A673 (cell line): ENCODE measurements at regions of chr2 and their contacts with region 1.

Region 1: GRCh38 chr2:238784671-238785527 is 63.0 kb upstream of the TWIST2 start:
- DNase-seq: peak; percentile 72
- H3K4me3 ChIP-seq: no peak overlapping the region
- H3K27ac ChIP-seq: no peak overlapping the region
- H3K4me1 ChIP-seq: no peaks in the 10 kb centered on the region
- H3K27me3 ChIP-seq: peaks cover 27% of the 10 kb centered on the region
- CTCF ChIP-seq: peak; percentile 92

Region 2: DNA sequence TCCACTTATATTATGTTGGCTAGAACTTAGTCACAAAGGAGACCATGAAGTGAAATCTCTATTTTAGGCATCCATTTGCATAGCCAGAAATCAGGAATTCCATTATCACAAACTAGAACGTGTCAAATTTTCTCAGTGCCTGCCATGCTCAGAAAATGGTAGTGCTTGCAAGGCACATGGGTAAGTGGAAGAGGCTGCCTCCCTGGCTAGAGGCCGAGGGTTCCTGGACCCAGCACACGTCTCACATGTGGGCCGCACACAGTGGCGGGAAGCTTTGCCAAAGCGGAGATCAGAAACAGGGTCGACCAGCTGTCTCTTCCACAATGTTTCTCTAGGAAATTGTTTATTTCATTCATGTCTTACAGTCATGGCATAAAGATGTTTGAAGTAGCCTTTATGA is 422.3 kb before region 1 on chr2:
- CTCF ChIA-PET with region 1: interaction called, 11 read pairs
- POLR2A ChIA-PET with region 1: no interaction called
- intact Hi-C with region 1: no loop called
- DNase-seq: no peak
- H3K4me3 ChIP-seq: no peak overlapping the region
- H3K27ac ChIP-seq: no peak overlapping the region
- H3K4me1 ChIP-seq: no peaks in the 10 kb centered on the region
- H3K27me3 ChIP-seq: no peaks in the 10 kb centered on the region
- CTCF ChIP-seq: no peak

Region 3: GRCh38 chr2:238370823-238371372 is 414.0 kb before region 1 on chr2:
- CTCF ChIA-PET with region 1: interaction called, 9 read pairs
- POLR2A ChIA-PET with region 1: no interaction called
- intact Hi-C with region 1: loop called (anchors 2 kb)
- DNase-seq: peak; percentile 66
- H3K4me3 ChIP-seq: no peak overlapping the region
- H3K27ac ChIP-seq: no peak overlapping the region
- H3K4me1 ChIP-seq: no peaks in the 10 kb centered on the region
- H3K27me3 ChIP-seq: no peaks in the 10 kb centered on the region
- CTCF ChIP-seq: peak; percentile 69

Region 4: GRCh38 chr2:238513346-238513745 is 271.6 kb before region 1 on chr2:
- CTCF ChIA-PET with region 1: interaction called, 13 read pairs
- POLR2A ChIA-PET with region 1: no interaction called
- intact Hi-C with region 1: loop called (anchors 2 kb)
- DNase-seq: peak; percentile 70
- H3K4me3 ChIP-seq: no peak overlapping the region
- H3K27ac ChIP-seq: no peak overlapping the region
- H3K4me1 ChIP-seq: no peaks in the 10 kb centered on the region
- H3K27me3 ChIP-seq: peaks cover 4% of the 10 kb centered on the region
- CTCF ChIP-seq: peak; percentile 78

Region 5: GRCh38 chr2:238847841-238848690 is 63.2 kb after region 1 on chr2 and contains the start of gene TWIST2:
- CTCF ChIA-PET with region 1: no interaction called
- POLR2A ChIA-PET with region 1: no interaction called
- intact Hi-C with region 1: no loop called
- DNase-seq: peak; percentile 54
- H3K4me3 ChIP-seq: peak within 1 kb of the TSS; percentile 40
- H3K27ac ChIP-seq: no peak within 1 kb of the TSS
- H3K4me1 ChIP-seq: no peaks in the 10 kb centered on the region
- H3K27me3 ChIP-seq: peaks cover 96% of the 10 kb centered on the region
- CTCF ChIP-seq: no peak
- total RNA-seq, gene TWIST2: not detected in 2 replicates